Activated CD8-positive, alpha-beta T cell treated with anti-CD3 and anti-CD28 coated beads, Interleukin-2, amount 10 ng/mL, durations not matched to agents 7 days and 5 days (primary cell): ENCODE measurements at regions of chr17 and their contacts with region 1.

Region 1: GRCh38 chr17:4420692-4421131 is 13.0 kb upstream of the SPNS3 start:
- DNase-seq: peak; percentile 82
- ATAC-seq: peak; percentile 96
- H3K4me3 Mint-ChIP-seq: no peak overlapping the region
- H3K27ac Mint-ChIP-seq: peak overlapping the region; percentile 20
- H3K4me1 Mint-ChIP-seq: peaks cover 8% of the 10 kb centered on the region
- H3K27me3 Mint-ChIP-seq: no peaks in the 10 kb centered on the region

Region 2: DNA sequence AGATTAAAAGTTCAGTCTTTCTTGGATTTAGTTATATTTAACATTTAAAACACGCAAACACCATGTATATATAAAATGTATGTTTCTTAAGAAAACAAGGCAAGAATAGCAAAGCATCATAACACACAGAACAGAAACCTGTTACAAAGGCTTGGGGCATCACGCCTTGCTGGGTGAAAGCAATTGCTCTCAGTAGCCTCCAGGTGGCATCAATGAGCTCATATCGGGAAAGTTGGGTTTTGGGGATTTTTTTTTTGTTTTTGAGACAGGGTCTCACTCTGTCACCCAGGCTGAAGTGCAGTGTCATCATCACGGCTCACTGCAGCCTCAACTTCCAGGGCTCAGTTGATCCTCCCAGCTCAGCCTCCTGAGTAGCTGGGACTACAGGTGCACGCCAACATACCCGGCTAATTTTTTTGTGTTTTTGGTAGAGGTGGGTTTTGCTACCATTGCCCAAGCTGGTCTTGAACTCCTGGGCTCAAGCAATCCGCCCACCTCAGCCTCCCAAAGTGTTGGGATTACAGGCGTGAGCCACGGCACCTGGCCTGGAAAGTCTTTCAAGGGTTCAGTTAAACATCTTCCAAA is 220.8 kb before region 1 on chr17:
- CTCF ChIA-PET with region 1: interaction called, 10 read pairs
- POLR2A ChIA-PET with region 1: no interaction called
- DNase-seq: peak; percentile 53
- ATAC-seq: peak; percentile 57
- H3K4me3 Mint-ChIP-seq: no peak overlapping the region
- H3K27ac Mint-ChIP-seq: no peak overlapping the region
- H3K4me1 Mint-ChIP-seq: no peaks in the 10 kb centered on the region
- H3K27me3 Mint-ChIP-seq: no peaks in the 10 kb centered on the region

Region 3: GRCh38 chr17:4433515-4434031 is 12.9 kb after region 1 on chr17 and contains the start of gene SPNS3:
- CTCF ChIA-PET with region 1: interaction called, 15 read pairs
- POLR2A ChIA-PET with region 1: interaction called, 5 read pairs
- DNase-seq: peak; percentile 80
- ATAC-seq: peak; percentile 82
- H3K4me3 Mint-ChIP-seq: peak within 1 kb of the TSS; percentile 82
- H3K27ac Mint-ChIP-seq: peak within 1 kb of the TSS; percentile 93
- H3K4me1 Mint-ChIP-seq: peaks cover 47% of the 10 kb centered on the region
- H3K27me3 Mint-ChIP-seq: peaks cover 3% of the 10 kb centered on the region
- total RNA-seq, gene SPNS3: 26.8 to 29.1 TPM

Region 4: DNA sequence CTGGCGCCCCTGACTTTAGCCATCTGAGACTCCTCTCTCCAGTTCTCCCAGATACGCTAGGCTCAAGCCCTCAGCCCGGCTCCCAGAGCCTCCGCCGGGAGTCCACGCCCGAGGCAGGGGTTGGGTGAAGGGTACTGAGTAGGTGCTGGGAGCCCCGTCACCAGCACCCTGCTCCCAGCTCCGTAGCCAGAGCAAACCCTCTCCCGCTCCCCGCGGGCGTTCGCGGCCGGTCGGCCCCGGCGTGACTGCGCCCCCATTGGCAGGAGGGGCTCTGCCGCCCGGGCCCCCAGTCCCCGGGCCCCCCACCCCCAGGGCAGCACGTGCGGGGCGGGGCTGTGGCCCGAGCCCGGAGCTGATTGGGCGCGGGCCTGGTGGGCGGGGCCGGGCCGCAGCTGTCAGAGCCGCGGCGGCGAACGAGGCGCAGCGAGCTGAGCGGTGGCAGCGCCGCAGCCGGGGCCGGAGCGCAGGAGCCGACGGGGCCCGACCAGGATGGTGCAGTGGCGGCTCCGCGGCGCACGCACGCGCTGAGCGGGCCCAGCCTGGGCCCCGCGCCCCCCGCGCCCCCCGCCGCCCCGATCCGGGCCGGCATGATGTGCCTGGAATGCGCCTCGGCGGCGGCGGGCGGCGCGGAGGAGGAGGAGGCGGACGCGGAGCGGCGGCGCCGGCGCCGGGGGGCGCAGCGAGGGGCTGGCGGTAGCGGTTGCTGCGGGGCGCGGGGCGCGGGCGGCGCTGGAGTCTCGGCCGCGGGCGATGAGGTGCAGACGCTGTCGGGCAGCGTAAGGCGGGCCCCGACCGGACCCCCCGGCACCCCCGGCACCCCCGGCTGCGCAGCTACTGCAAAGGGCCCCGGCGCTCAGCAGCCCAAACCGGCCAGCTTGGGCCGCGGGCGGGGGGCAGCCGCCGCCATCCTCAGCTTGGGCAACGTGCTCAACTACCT is 78.0 kb after region 1 on chr17 and contains the start of gene SPNS2:
- CTCF ChIA-PET with region 1: interaction called, 19 read pairs
- POLR2A ChIA-PET with region 1: interaction called, 3 read pairs
- DNase-seq: peak; percentile 66
- ATAC-seq: peak; percentile 82
- H3K4me3 Mint-ChIP-seq: peak within 1 kb of the TSS; percentile 75
- H3K27ac Mint-ChIP-seq: peak within 1 kb of the TSS; percentile 50
- H3K4me1 Mint-ChIP-seq: peaks cover 41% of the 10 kb centered on the region
- H3K27me3 Mint-ChIP-seq: peaks cover 22% of the 10 kb centered on the region
- total RNA-seq, gene SPNS2: 4.0 to 4.2 TPM

Region 5: GRCh38 chr17:4565209-4566141 is 144.8 kb after region 1 on chr17:
- CTCF ChIA-PET with region 1: interaction called, 25 read pairs
- POLR2A ChIA-PET with region 1: interaction called, 3 read pairs
- DNase-seq: peak; percentile 75
- ATAC-seq: peak; percentile 84
- H3K4me3 Mint-ChIP-seq: peak overlapping the region; percentile 7
- H3K27ac Mint-ChIP-seq: no peak overlapping the region
- H3K4me1 Mint-ChIP-seq: peaks cover 40% of the 10 kb centered on the region
- H3K27me3 Mint-ChIP-seq: peaks cover 2% of the 10 kb centered on the region